ENCODE measurements at regions of chr6 and their contacts with region 1.

Region 1: DNA sequence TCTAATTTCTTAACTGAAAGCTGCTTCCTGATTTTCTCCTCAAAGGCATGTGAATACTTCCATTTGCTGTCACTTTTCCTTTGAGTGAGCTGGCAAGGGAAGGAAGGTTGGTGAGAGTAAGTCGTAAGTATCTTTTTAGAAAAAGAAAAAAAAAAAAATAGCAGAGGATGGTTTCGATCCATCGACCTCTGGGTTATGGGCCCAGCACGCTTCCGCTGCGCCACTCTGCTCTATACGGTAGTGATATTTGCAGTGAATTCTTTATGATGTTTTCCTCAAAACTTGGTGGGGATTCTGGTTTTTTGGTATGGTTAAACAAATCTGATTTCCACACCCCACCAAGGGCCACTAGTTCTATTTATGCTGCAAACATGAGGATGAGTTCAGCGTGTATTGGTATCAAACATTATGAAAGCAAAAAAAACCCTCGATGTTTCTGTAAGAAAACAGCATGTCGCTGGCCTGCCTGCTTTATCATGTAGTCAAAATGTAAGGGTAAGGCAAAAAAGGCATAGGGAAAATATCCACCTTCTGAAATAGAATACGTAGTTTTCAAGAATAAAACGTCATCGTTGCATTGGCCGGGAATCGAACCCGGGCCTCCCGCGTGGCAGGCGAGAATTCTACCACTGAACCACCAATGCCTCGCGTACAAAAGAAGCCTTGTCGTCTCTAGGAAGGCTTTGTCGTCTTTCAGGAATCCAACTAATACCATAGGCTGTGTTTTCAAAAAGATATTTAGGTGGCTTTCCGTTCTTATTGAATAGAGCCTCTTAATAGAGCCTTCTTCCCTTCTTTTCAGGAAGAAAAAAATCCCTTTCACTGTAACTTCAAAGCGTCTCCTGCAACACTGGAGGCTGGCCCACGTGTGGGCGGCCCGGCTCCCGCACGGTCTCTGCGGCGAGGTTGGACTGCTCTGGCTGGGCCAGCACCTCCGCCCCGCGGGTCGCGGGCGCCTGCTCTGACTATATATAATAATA is 9.6 kb downstream of the OR2B2 start:
- DNase-seq: peak; percentile 86
- ATAC-seq: peak; percentile 93

Region 2: GRCh38 chr6:26312501-26313390 is 1589.9 kb before region 1 on chr6:
- intact Hi-C with region 1: loop called (anchors 5 kb)
- DNase-seq: peak; percentile 79
- ATAC-seq: peak; percentile 92

Region 3: DNA sequence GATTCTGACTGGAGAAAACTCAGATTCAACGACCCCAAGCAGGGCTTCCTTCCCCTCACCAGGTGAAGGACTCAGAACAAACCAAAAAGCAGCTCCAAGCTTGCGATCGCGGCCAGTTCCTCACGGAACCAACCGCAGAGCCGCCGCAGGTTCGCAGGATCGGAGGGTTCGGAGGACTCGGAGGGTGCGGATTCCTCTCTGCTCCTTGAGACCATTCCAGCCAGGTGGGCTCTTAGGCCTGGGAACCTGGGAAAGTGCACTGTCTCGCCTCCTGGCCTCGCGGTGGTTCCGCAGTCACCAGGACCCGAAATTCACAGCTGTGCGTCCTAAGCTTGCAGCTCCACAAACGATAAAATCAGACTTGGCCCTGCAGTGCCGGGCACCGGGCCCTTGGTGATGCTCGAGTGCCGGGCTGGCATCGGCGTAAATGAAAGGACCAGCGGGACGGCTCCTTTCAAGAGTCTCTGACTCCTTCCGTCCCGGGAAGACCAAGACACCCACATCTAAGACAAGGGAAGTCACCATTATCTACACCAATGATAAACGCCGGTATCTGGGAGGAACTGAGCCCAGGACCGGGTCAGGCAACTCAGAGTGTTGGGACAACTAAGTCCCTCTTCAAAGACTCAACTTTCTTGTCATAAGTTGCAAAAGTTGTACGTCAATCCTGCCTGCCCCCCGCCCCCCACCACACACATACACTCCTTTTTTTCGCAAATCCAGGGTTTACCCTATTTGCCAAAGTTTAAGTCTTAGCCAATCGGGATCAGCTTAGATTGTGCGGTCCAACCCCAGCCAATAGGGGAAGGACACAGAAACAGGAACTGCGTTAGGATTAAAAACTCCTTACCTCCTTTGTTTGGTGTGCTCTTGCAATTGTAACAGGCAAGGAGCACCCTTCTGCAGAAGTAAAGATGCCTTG is 724.9 kb before region 1 on chr6:
- intact Hi-C with region 1: loop called (anchors 5 kb)
- DNase-seq: peak; percentile 87
- ATAC-seq: peak; percentile 81

Region 4: DNA sequence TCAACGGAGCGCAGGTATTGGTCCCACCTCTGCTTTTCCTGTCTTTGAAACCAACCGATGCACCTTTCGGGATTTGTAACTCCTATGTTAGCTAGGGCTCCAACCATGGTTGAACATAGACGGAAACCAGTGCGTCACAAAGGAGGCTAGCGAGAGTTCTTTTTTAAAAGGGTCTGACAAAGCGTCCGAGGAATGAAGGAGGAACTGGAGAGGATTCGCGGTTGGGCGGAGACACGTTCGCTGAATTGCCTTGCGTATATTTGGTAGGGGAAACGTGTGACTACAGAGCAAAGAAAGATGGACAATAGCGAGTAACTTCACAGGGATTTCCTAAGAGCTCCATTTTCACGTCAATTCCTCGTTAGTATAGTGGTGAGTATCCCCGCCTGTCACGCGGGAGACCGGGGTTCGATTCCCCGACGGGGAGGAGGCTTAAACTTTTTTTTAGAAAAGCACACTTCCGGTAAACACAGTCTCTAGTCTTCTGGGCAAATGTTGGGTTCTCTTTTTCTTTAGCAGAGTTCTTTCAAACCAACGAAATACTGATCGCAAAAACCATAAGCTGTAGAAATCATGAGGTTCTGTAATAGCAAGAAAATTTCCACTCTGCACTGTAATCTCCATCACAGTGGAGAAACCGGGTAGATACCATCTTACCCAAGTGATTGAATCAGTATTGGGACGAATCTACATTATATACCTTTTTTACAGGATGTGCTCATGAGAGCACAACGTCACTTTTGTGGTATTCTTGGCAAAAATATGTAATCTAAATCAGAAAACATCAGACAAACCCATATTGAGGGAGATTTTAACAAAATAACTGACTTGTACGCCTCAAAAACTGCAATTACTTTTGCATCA is 423.1 kb before region 1 on chr6:
- intact Hi-C with region 1: loop called (anchors 5 kb)
- DNase-seq: peak; percentile 73
- ATAC-seq: peak; percentile 93

Region 5: GRCh38 chr6:27753668-27754407 is 148.8 kb before region 1 on chr6:
- intact Hi-C with region 1: loop called (anchors 2 kb)
- DNase-seq: peak; percentile 85
- ATAC-seq: peak; percentile 53

Region 6: DNA sequence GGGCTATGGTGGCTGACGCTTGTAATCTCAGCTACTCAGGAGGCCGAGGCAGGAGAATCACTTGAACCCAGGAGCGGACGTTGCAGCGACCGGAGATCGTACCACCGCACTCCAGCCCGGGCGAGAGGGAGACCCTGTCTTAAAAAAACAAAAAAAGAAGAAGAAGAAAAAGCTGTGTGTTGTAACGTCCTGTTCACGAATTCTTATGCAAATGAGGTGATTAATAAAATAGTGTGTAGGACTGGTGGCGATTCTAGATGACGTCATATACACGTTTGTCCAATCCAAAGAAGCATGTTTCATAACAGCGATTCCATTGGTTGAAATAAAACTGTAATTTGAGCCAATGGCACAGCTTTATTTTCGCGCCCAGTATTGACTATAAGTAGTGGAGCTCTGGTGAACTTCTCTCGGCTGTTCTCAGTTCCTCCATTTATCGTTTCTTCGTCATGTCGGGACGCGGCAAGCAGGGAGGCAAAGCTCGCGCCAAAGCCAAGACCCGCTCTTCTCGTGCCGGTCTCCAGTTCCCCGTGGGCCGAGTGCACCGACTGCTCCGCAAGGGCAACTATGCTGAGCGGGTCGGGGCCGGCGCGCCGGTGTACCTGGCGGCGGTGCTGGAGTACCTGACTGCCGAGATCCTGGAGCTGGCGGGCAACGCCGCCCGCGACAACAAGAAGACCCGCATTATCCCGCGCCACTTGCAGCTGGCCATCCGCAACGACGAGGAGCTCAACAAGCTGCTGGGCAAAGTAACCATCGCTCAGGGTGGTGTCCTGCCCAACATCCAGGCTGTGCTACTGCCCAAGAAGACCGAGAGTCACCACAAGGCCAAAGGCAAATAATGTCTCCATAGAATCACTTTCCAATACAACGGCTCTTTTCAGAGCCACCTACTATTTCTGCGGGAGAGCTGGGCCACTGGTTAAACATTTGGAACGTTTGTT is 37.4 kb before region 1 on chr6:
- intact Hi-C with region 1: loop called (anchors 5 kb)
- DNase-seq: peak; percentile 85
- ATAC-seq: peak; percentile 87

Region 7: GRCh38 chr6:27986928-27987725 is 84.5 kb after region 1 on chr6:
- intact Hi-C with region 1: no loop called
- DNase-seq: no peak
- ATAC-seq: no peak